Endothelial cell of umbilical vein (primary cell): ENCODE measurements at regions of chr4 and their contacts with region 1.

Region 1: DNA sequence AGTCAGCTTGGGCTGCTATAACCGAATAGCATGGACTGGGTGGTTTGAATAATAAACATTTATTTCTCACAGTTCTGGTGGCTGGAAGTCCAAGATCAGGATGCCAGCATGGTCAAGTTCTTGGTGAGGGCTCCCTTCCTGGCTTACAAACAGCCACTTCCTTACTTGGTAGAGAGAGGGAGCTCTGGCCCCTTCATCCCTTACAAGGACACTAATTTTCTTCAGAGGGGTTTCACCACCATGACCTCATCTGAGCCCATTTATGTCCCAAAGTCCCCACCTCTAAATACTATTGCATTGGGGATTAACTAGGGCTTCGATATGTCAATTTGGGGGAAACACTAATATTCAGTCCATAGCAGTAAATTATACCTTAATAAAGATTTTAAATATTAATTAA is 61.8 kb downstream of the CLNK start:
- DNase-seq: peak; percentile 20
- H3K4me3 ChIP-seq: no peak overlapping the region
- H3K27ac ChIP-seq: no peak overlapping the region
- H3K4me1 ChIP-seq: no peaks in the 10 kb centered on the region
- H3K27me3 ChIP-seq: peaks cover 6 to 30% of the 10 kb centered on the region in 2 experiments
- CTCF ChIP-seq: peak; percentile 20 to 57
- POLR2A ChIP-seq: no peak

Region 2: DNA sequence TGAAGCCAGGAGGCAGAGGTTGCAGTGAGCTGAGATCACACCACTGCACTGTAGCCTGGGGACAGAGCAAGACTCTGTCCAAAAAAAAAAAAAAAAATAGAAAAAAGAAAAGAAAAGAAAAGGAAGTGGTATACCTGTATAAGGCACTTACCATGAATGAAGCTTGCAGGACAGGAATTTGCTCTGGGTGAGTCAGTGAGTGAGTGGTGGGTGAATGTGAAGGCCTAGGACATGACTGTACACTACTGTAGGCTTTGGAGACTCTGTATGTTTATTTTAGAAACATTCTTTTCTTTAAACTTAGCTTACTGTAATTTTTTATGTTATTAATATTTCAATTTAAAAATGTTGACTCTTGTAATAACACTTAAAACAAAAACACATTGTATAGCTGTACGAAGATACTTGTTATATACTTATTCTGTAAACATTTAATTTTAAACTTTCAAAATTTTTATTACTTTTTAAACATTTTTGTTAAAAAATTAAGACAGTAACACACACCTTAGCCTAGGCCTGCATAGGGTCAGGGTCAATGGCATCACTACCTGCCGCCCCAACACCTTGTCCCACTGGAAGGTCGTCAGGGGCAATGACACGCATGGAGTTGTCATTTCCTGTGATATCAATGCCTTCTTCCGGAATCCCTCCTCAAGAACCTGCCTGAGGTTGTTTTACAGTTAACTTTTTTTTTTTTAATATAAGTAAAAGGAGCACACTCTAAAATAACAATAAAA is 16.8 kb before region 1 on chr4:
- CTCF ChIA-PET with region 1: interaction called, 13 read pairs
- POLR2A ChIA-PET with region 1: no interaction called
- dilution Hi-C with region 1: no loop called
- intact Hi-C with region 1: no loop called
- DNase-seq: no peak
- H3K4me3 ChIP-seq: no peak overlapping the region
- H3K27ac ChIP-seq: peak overlapping the region; percentile 71
- H3K4me1 ChIP-seq: peaks cover 11% of the 10 kb centered on the region
- H3K27me3 ChIP-seq: no peaks in the 10 kb centered on the region
- CTCF ChIP-seq: no peak
- POLR2A ChIP-seq: no peak

Region 3: DNA sequence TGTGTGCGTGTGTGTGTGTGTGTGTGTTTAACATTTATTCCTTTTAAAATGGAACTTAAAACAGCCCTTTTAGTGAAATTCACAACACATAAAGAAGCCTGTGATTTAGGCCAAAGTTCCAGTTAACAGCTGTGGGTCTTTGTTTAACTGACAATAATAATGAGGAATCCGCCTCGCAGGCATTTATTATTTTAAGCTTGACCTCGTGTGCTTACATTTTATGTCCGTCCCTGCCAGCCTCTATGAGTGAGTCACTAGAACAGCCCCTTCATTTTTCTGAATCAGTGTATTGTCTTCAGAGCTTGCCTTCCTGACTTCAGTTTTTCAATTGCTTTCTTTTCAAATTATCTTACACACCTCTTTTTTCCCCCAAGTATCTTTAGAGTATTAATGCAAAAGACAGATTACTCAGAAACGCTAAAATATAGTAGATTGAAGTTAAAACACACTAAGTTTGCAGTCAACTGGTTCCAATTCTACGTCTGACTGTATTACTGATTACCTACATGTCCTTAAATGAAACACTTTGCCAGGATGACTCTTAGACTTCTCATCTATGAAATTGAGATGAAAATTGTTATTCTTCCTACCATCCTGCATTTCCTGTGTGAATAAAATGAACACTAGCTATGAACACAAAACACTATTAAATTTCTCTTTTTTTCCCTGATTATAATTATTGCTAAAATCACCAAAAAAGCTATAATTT is 1125.6 kb after region 1 on chr4:
- CTCF ChIA-PET with region 1: no interaction called
- POLR2A ChIA-PET with region 1: no interaction called
- dilution Hi-C with region 1: loop called (anchors 25 kb)
- intact Hi-C with region 1: no loop called
- DNase-seq: peak; percentile 96
- H3K4me3 ChIP-seq: peak overlapping the region in 1 of 3 experiments; percentile 48
- H3K27ac ChIP-seq: peak overlapping the region; percentile 85
- H3K4me1 ChIP-seq: peaks cover 48% of the 10 kb centered on the region
- H3K27me3 ChIP-seq: no peaks in the 10 kb centered on the region
- CTCF ChIP-seq: no peak
- POLR2A ChIP-seq: no peak